ENCODE measurements at regions of chr6 and their contacts with region 1.

Region 1: GRCh38 chr6:67009818-67010217 is 1302.8 kb upstream of the EYS start:
- DNase-seq: peak; percentile 39
- ATAC-seq: peak; percentile 90
- H3K4me3 ChIP-seq: no peak overlapping the region
- H3K27ac ChIP-seq: no peak overlapping the region
- H3K4me1 ChIP-seq: no peaks in the 10 kb centered on the region
- H3K27me3 ChIP-seq: no peaks in the 10 kb centered on the region
- CTCF ChIP-seq: peak; percentile 55
- EP300 ChIP-seq: no peak
- POLR2A ChIP-seq: no peak
- RAD21 ChIP-seq: 0 out of 2 replicates have a peak, but pooled peaks have one; percentile 14

Region 2: GRCh38 chr6:65979120-65979519 is 1030.7 kb before region 1 on chr6:
- CTCF ChIA-PET with region 1: no interaction called
- POLR2A ChIA-PET with region 1: no interaction called
- in situ Hi-C with region 1: no loop called
- intact Hi-C with region 1: no loop called
- DNase-seq: no peak
- ATAC-seq: no peak
- H3K4me3 ChIP-seq: no peak overlapping the region
- H3K27ac ChIP-seq: no peak overlapping the region
- H3K4me1 ChIP-seq: no peaks in the 10 kb centered on the region
- H3K27me3 ChIP-seq: no peaks in the 10 kb centered on the region
- CTCF ChIP-seq: no peak
- EP300 ChIP-seq: no peak
- POLR2A ChIP-seq: no peak
- RAD21 ChIP-seq: no peak

Region 3: DNA sequence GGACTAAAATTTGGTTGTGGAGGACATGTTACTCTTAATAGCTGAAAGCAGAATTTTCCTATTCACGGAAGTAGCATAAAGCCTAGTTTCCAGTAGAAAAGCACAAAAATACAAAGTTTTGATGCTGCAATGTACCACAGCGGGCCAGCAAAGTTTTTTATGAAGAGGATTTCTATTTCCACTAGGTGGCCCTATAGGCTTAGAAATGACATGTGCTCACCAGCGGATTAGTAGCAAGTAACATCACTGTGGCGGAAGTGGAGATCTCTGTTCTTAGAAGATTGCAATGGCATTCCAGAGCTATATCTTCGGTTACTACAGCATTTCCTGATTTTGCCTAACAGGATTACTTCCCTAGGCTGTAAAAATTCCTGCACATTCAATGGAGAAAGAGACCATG is 83.8 kb before region 1 on chr6:
- CTCF ChIA-PET with region 1: interaction called, 14 read pairs
- POLR2A ChIA-PET with region 1: no interaction called
- in situ Hi-C with region 1: no loop called
- intact Hi-C with region 1: loop called (anchors 1 kb)
- DNase-seq: peak; percentile 69
- ATAC-seq: peak; percentile 96
- H3K4me3 ChIP-seq: no peak overlapping the region
- H3K27ac ChIP-seq: no peak overlapping the region
- H3K4me1 ChIP-seq: no peaks in the 10 kb centered on the region
- H3K27me3 ChIP-seq: no peaks in the 10 kb centered on the region
- CTCF ChIP-seq: peak; percentile 82
- EP300 ChIP-seq: no peak
- POLR2A ChIP-seq: no peak
- RAD21 ChIP-seq: peak; percentile 69; the same call in 1 of the 2 replicates

Region 4: GRCh38 chr6:66937180-66937579 is 72.6 kb before region 1 on chr6:
- CTCF ChIA-PET with region 1: no interaction called
- POLR2A ChIA-PET with region 1: no interaction called
- in situ Hi-C with region 1: no loop called
- intact Hi-C with region 1: no loop called
- DNase-seq: no peak
- ATAC-seq: no peak
- H3K4me3 ChIP-seq: no peak overlapping the region
- H3K27ac ChIP-seq: no peak overlapping the region
- H3K4me1 ChIP-seq: no peaks in the 10 kb centered on the region
- H3K27me3 ChIP-seq: no peaks in the 10 kb centered on the region
- CTCF ChIP-seq: no peak
- EP300 ChIP-seq: no peak
- POLR2A ChIP-seq: no peak
- RAD21 ChIP-seq: no peak

Region 5: DNA sequence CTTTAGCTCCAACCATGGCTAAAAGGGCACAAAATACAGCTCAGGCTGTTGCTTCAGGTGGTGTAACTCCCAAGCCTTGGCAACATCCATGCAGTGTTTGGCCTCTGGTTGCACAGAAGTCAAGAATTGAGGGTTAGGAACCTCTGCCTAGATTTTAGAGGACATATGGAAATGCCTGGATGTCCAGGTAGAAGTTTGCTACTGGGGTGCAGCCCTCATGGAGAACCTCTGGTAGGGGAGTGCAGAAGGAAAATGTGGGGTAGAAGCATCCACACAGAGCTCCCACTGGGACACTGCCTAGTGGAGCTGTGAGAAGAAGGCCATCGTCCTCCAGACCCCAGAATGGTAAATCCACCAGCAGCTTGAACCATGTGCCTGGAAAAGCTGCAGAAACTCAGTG is 151.0 kb after region 1 on chr6:
- CTCF ChIA-PET with region 1: no interaction called
- POLR2A ChIA-PET with region 1: no interaction called
- in situ Hi-C with region 1: no loop called
- intact Hi-C with region 1: no loop called
- DNase-seq: no peak
- ATAC-seq: no peak
- H3K4me3 ChIP-seq: no peak overlapping the region
- H3K27ac ChIP-seq: no peak overlapping the region
- H3K4me1 ChIP-seq: no peaks in the 10 kb centered on the region
- H3K27me3 ChIP-seq: no peaks in the 10 kb centered on the region
- CTCF ChIP-seq: no peak
- EP300 ChIP-seq: no peak
- POLR2A ChIP-seq: no peak
- RAD21 ChIP-seq: no peak